ENCODE measurements at regions of chr20 and their contacts with region 1.

Region 1: GRCh38 chr20:57108732-57109573 is 157.5 kb downstream of the BMP7 start:
- DNase-seq: no peak
- ATAC-seq: no peak
- H3K4me3 ChIP-seq: no peak overlapping the region; the same call in 1 of the 2 replicates
- H3K27ac ChIP-seq: no peak overlapping the region
- H3K4me1 ChIP-seq: peaks cover 7 to 14% of the 10 kb centered on the region in 2 experiments; a peak in 4 of 5 replicates
- H3K27me3 ChIP-seq: peaks cover 9 to 12% of the 10 kb centered on the region in 2 experiments; a peak in 3 of 5 replicates
- CTCF ChIP-seq: no peak
- EP300 ChIP-seq: no peak
- POLR2A ChIP-seq: no peak
- RAD21 ChIP-seq: no peak

Region 2: GRCh38 chr20:57526087-57526884 is 417.3 kb after region 1 on chr20:
- CTCF ChIA-PET with region 1: no interaction called
- POLR2A ChIA-PET with region 1: no interaction called
- in situ Hi-C with region 1: no loop called
- intact Hi-C with region 1: loop called (anchors 5 kb)
- DNase-seq: peak; percentile 70 to 95 (median 77)
- ATAC-seq: peak; percentile 60
- H3K4me3 ChIP-seq: peak overlapping the region; percentile 26
- H3K27ac ChIP-seq: peak overlapping the region; percentile 93; the same call in 1 of the 3 replicates
- H3K4me1 ChIP-seq: peaks cover 22 to 32% of the 10 kb centered on the region in 2 experiments; a peak in 4 of 5 replicates
- H3K27me3 ChIP-seq: no peaks in the 10 kb centered on the region
- CTCF ChIP-seq: peak; percentile 59 to 98 (median 86)
- EP300 ChIP-seq: no peak; the same call in none of the 2 replicates
- POLR2A ChIP-seq: no peak
- RAD21 ChIP-seq: peak in 1 of 2 experiments; percentile 17; a peak in 1 of 4 replicates